Activated B cell treated with CpG ODN at 0.5 μM for 24 hours (primary cell): ENCODE measurements at regions of chr9 and their contacts with region 1.

Region 1: GRCh38 chr9:71795097-71795813 is 26.9 kb upstream of the CEMIP2 start:
- DNase-seq: no peak
- ATAC-seq: peak; percentile 84
- H3K4me3 Mint-ChIP-seq: peak overlapping the region; percentile 67
- H3K27ac Mint-ChIP-seq: peak overlapping the region; percentile 87
- H3K4me1 Mint-ChIP-seq: peaks cover 79% of the 10 kb centered on the region
- H3K27me3 Mint-ChIP-seq: no peaks in the 10 kb centered on the region
- CTCF ChIP-seq: no peak

Region 2: DNA sequence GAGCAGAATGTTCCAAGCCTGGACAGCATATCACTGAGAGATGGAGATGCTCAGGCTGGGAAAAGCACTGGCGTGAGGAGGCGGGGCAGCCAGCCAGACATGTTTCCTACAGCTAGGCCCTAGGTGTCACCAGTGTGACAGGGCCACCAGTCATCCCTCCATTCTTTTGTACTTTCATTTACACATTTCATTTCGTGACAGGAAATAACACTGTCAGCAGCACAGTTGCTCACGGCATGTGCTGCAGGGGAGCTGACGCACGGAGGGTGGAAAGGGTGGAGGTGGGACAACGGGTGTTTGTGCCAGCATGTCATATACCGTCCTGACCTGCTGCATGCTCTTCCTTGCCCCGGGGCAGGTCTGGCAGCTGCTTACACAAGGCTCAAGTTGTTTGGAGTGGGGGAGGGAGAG is 12.1 kb before region 1 on chr9:
- CTCF ChIA-PET with region 1: interaction called, 11 read pairs
- POLR2A ChIA-PET with region 1: interaction called, 39 read pairs
- intact Hi-C with region 1: loop called (anchors 1 kb)
- DNase-seq: peak; percentile 37
- ATAC-seq: peak; percentile 83
- H3K4me3 Mint-ChIP-seq: peak overlapping the region; percentile 68
- H3K27ac Mint-ChIP-seq: peak overlapping the region; percentile 92
- H3K4me1 Mint-ChIP-seq: peaks cover 41% of the 10 kb centered on the region
- H3K27me3 Mint-ChIP-seq: no peaks in the 10 kb centered on the region
- CTCF ChIP-seq: no peak